CD8-positive, alpha-beta memory T cell (primary cell): ENCODE measurements at regions of chr6 and their contacts with region 1.

Region 1: DNA sequence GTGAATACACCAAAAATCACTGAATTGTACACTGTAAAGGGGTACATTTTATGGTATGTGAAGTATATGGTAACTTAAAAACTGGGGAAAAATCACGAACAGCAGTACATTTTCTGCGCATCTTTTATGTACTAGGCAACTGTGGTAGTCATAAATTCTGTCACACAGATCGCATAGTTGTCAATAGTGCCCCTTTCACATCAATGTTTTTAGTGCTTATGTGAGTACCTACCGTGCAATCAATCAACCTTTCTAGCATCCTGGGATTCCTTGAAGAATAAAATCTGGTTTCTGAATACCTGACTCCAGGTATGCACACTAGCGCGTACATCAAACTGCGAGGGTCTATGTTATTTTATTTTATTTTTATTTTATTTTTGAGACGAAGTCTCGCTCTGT is 637 bp upstream of the RPF2 start:
- DNase-seq: no peak
- H3K4me3 ChIP-seq: peak overlapping the region; percentile 95
- H3K4me3 Mint-ChIP-seq: peak overlapping the region; percentile 97 to 99 (median 99)
- H3K27ac ChIP-seq: peak overlapping the region; percentile 93
- H3K27ac Mint-ChIP-seq: peak overlapping the region; percentile 96 to 100 (median 99)
- H3K4me1 ChIP-seq: peaks cover 10% of the 10 kb centered on the region
- H3K4me1 Mint-ChIP-seq: peaks cover 33 to 57% (median 53%) of the 10 kb centered on the region in 3 donors
- H3K27me3 ChIP-seq: no peaks in the 10 kb centered on the region
- H3K27me3 Mint-ChIP-seq: peaks cover 0 to 3% of the 10 kb centered on the region in 2 donors

Region 2: DNA sequence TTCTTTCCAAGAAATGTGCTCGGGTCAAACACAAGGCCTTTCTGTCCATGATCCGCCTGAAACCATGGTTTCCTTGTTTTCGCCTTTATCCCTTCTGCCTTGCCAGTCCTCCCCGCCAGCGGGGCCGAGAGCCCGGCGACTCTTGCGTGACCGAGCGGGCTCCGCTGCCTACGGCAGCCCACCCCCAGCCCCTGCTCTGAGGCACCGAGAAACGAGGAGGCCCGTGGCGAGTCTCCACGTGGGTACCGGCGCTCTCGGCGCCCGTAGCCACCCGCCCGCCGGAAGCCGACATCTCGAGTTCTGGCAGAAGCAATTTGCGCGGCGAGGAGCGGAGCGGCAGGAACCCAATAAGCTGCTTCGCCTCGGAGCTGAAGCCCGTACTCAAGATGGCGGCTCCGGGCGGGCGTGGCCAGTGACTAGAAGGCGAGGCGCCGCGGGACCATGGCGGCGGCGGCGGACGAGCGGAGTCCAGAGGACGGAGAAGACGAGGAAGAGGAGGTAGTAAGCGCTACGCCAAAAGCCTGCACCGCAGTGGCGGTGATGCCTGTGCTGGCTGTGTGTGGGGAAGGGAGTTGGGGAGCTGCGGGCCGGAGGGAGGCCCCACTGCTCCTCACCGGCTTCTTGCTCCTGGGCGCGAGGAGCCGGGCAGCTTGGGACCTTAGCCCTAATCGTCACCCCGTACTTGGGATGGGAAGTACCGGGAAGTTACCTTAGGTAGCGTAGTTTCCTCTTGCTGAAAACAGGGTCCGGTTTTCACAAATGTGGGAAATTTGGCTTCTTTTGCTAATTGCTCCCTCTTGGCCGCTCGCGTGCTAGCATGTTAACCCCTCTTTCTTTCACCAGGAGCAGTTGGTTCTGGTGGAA is 22.6 kb before region 1 on chr6 and contains the start of gene GTF3C6:
- CTCF ChIA-PET with region 1: interaction called, 12 read pairs
- POLR2A ChIA-PET with region 1: interaction called, 13 read pairs
- DNase-seq: peak; percentile 89 to 95 (median 90)
- H3K4me3 ChIP-seq: peak within 1 kb of the TSS; percentile 99
- H3K4me3 Mint-ChIP-seq: peak within 1 kb of the TSS; percentile 95 to 100 (median 98)
- H3K27ac ChIP-seq: peak within 1 kb of the TSS; percentile 93
- H3K27ac Mint-ChIP-seq: peak within 1 kb of the TSS; percentile 73 to 99 (median 98)
- H3K4me1 ChIP-seq: peaks cover 13% of the 10 kb centered on the region
- H3K4me1 Mint-ChIP-seq: peaks cover 13 to 25% (median 21%) of the 10 kb centered on the region in 3 donors
- H3K27me3 ChIP-seq: no peaks in the 10 kb centered on the region
- H3K27me3 Mint-ChIP-seq: peaks cover 6 to 13% of the 10 kb centered on the region in 2 donors
- total RNA-seq, gene GTF3C6: 162 to 163 TPM

Region 3: GRCh38 chr6:111265842-111266241 is 284.6 kb after region 1 on chr6:
- CTCF ChIA-PET with region 1: no interaction called
- POLR2A ChIA-PET with region 1: no interaction called
- DNase-seq: no peak
- H3K4me3 ChIP-seq: no peak overlapping the region
- H3K4me3 Mint-ChIP-seq: no peak overlapping the region
- H3K27ac ChIP-seq: no peak overlapping the region
- H3K27ac Mint-ChIP-seq: peak overlapping the region in 1 of 8 donors; percentile 26
- H3K4me1 ChIP-seq: peaks cover 9% of the 10 kb centered on the region
- H3K4me1 Mint-ChIP-seq: peaks cover 30 to 54% (median 51%) of the 10 kb centered on the region in 3 donors
- H3K27me3 ChIP-seq: no peaks in the 10 kb centered on the region
- H3K27me3 Mint-ChIP-seq: no peaks in the 10 kb centered on the region

Region 4: DNA sequence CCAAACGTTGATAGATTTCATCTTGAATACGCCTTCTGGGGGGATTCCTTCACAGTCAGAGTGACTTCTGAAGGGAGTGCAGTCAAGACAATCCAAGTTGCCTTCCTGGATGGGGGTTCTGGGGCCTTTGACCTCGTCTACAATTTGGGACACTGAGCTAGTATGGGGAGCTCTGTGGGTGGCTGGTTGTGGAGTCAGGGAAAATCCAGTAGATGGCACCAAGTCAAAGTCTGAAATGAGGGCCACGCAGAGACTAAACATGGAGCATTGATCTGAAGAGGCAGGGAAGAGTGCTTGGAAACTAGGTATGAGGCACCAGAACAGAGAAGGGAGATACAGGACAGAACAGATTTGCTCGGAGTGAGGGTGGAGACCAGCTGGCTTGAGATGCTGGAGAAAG is 1029.1 kb after region 1 on chr6:
- CTCF ChIA-PET with region 1: no interaction called
- POLR2A ChIA-PET with region 1: no interaction called
- DNase-seq: peak in 2 of 5 donors; percentile 33 to 51
- H3K4me3 ChIP-seq: no peak overlapping the region
- H3K4me3 Mint-ChIP-seq: no peak overlapping the region
- H3K27ac ChIP-seq: no peak overlapping the region
- H3K27ac Mint-ChIP-seq: peak overlapping the region in 2 of 8 donors; percentile 2 to 44
- H3K4me1 ChIP-seq: peaks cover 5% of the 10 kb centered on the region
- H3K4me1 Mint-ChIP-seq: peaks cover 0 to 4% (median 0%) of the 10 kb centered on the region in 3 donors
- H3K27me3 ChIP-seq: no peaks in the 10 kb centered on the region
- H3K27me3 Mint-ChIP-seq: peaks cover 0 to 4% of the 10 kb centered on the region in 2 donors